AG04450 (cell line): ENCODE measurements at regions of chr5 and their contacts with region 1.

Region 1: GRCh38 chr5:179166886-179167841 is 107.0 kb downstream of the ZNF354C start:
- DNase-seq: peak; percentile 7
- H3K4me3 ChIP-seq: peak overlapping the region; percentile 53
- H3K27ac ChIP-seq: no peak overlapping the region
- H3K27me3 ChIP-seq: no peaks in the 10 kb centered on the region
- CTCF ChIP-seq: peak; percentile 74

Region 2: DNA sequence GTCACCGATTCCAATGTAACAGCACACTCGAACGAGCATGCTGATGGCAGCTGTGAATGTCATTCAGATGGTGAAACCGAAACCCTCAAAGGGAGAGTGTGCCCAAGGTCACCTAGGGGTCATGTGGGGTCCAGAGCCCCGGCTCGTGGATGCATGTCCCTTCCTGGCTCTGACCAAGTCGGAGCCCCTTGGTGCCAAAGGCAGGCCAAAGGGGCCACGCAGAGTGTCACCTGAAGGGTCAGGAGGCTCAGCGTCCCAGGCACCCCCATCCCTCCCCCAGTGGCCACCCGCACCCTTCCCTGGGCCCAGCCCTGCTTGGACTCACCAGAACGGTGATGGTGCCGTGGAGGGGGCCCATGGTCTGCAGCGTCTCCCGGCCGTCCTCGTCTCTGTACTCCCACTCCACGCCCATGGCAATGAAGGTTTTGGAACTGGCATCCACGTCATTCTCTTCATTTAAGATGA is 37.5 kb before region 1 on chr5:
- CTCF ChIA-PET with region 1: no interaction called
- POLR2A ChIA-PET with region 1: no interaction called
- DNase-seq: no peak
- H3K4me3 ChIP-seq: no peak overlapping the region
- H3K27ac ChIP-seq: no peak overlapping the region
- H3K27me3 ChIP-seq: no peaks in the 10 kb centered on the region
- CTCF ChIP-seq: no peak

Region 3: DNA sequence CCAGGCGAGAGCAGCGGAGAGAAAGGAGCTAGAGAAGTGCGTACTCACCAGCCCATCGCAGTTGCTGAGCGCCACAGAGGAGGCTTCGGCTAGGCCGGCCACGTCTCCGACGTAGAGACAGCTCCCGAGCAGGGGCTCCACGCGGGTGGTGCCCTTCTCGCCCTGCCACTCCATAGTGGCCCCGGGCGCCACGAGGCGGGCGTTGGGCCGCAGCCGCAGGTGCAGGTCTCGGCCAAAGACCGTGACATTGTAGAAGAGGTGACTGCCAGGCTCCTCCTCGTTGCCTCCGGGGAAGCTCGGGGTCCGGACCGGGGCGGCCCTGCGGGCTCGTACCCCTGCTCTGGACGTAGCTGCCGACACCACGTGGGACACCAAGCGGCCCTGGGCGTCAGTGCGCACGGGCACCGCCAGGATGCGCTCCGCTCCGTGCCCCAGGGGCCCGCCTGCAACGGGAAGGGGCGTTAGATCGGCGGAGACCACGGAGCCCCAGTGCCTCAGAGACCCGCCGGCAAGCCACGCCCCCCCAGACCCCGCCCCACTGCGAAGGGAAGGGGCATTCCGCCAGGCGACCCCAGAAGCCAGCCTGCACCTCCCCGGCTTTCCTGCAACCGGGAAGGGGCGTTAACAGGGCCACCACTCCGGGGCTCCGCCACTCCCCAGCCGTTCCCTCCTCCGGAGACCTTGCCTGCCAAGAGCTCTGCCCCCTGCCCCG is 176.7 kb after region 1 on chr5:
- CTCF ChIA-PET with region 1: interaction called, 21 read pairs
- POLR2A ChIA-PET with region 1: no interaction called
- DNase-seq: no peak
- H3K4me3 ChIP-seq: peak overlapping the region; percentile 78
- H3K27ac ChIP-seq: no peak overlapping the region
- H3K27me3 ChIP-seq: peaks cover 2% of the 10 kb centered on the region
- CTCF ChIP-seq: peak; percentile 66

Region 4: DNA sequence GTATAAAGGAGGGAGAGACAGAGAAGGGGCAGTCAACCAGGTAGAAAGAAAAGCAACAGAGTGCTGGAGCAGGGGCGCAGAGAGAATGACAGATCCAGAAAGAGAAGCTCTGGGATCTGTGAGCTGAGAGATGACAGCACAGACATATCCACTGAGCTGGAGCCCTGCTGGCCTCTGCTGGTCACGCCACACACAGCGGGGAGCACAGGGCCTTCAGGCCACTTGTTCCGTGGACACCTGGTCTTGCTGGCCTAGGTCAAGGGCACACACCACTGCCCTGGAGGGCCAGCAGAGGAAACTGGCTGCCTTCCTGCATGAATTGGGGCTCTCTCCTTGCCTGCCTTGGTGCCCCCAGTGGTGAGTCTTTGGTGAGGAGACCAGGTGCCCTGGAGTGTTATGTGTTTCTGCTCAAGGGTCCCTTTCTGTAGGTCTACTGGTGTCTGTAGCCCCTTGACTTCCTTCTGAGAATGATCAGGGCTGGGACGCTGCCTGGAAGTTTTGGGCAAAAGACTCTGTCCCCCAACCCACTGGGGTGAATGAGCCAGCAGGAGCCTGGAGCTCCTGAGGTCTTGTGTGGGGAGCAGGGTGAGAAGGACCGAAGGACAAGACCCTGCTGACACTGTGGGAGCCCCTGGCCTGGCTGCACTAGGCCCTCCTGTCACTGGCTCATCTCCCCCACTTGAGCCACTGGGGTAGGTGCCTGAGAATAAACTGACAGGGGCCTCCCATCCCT is 237.3 kb after region 1 on chr5:
- CTCF ChIA-PET with region 1: interaction called, 20 read pairs
- POLR2A ChIA-PET with region 1: no interaction called
- DNase-seq: no peak
- H3K4me3 ChIP-seq: no peak overlapping the region
- H3K27ac ChIP-seq: no peak overlapping the region
- H3K27me3 ChIP-seq: no peaks in the 10 kb centered on the region
- CTCF ChIP-seq: peak; percentile 50

Region 5: DNA sequence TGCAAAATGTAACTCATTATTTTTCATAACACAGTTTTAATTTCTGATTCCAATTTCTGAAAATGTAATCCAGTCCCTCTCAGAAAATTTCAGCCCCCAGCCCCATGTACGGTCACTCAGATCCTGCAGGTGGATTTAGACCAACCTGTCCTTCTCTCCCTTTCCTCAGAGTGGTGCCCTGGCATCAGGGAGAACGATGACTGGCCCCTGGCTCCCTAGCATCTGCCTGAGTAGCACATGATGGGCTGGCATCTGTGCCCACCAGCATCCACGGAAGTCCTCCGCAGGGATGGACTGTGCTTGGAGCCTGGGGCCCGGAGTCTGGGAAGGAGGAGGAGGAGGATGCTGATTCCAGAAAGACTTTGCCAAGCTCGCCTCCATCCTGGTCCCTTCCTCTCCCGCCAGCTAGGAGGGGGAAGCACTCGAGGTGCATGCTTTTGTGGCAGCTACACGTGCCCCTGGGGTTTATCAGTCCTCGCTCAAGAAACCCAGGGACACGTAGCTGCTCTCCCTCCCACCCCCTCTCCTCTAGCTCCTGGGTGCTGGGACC is 328.8 kb after region 1 on chr5:
- CTCF ChIA-PET with region 1: interaction called, 91 read pairs
- POLR2A ChIA-PET with region 1: no interaction called
- DNase-seq: no peak
- H3K4me3 ChIP-seq: no peak overlapping the region
- H3K27ac ChIP-seq: no peak overlapping the region
- H3K27me3 ChIP-seq: peaks cover 4% of the 10 kb centered on the region
- CTCF ChIP-seq: no peak